H1 (cell line): ENCODE measurements at regions of chr1 and their contacts with region 1.

Region 1: GRCh38 chr1:205791568-205792180 is 16.4 kb upstream of the RAB29 start:
- DNase-seq: peak in 1 of 2 experiments; percentile 70
- H3K4me3 ChIP-seq: no peak overlapping the region
- H3K27ac ChIP-seq: no peak overlapping the region
- H3K4me1 ChIP-seq: no peaks in the 10 kb centered on the region
- H3K27me3 ChIP-seq: no peaks in the 10 kb centered on the region
- CTCF ChIP-seq: peak; percentile 82 to 84 (median 84)
- EP300 ChIP-seq: no peak
- POLR2A ChIP-seq: no peak
- RAD21 ChIP-seq: peak; percentile 93 to 95

Region 2: GRCh38 chr1:205576808-205577761 is 214.6 kb before region 1 on chr1:
- CTCF ChIA-PET with region 1: no interaction called
- POLR2A ChIA-PET with region 1: no interaction called
- DNase-seq: no peak
- H3K4me3 ChIP-seq: no peak overlapping the region
- H3K27ac ChIP-seq: no peak overlapping the region
- H3K4me1 ChIP-seq: peaks cover 0 to 11% (median 0%) of the 10 kb centered on the region in 4 experiments; a peak in 4 of 7 replicates
- H3K27me3 ChIP-seq: peaks cover 0 to 8% (median 3%) of the 10 kb centered on the region in 4 experiments; a peak in 4 of 7 replicates
- CTCF ChIP-seq: peak in 1 of 3 experiments; percentile 8; a peak in 1 of 4 replicates
- EP300 ChIP-seq: no peak
- POLR2A ChIP-seq: no peak
- RAD21 ChIP-seq: no peak; a peak in 1 of 4 replicates

Region 3: GRCh38 chr1:205711104-205712020 is 80.3 kb before region 1 on chr1:
- CTCF ChIA-PET with region 1: no interaction called
- POLR2A ChIA-PET with region 1: no interaction called
- DNase-seq: no peak
- H3K4me3 ChIP-seq: no peak overlapping the region
- H3K27ac ChIP-seq: peak overlapping the region; percentile 12; the same call in 1 of the 2 replicates
- H3K4me1 ChIP-seq: peaks cover 0 to 3% (median 1%) of the 10 kb centered on the region in 4 experiments; a peak in 2 of 7 replicates
- H3K27me3 ChIP-seq: no peaks in the 10 kb centered on the region
- CTCF ChIP-seq: peak in 2 of 3 experiments; percentile 85 to 86; a peak in 3 of 4 replicates
- EP300 ChIP-seq: no peak
- POLR2A ChIP-seq: no peak
- RAD21 ChIP-seq: peak; percentile 94 to 95

Region 4: GRCh38 chr1:205805082-205805712 is 13.5 kb after region 1 on chr1:
- CTCF ChIA-PET with region 1: interaction called, 79 read pairs
- POLR2A ChIA-PET with region 1: interaction called, 4 read pairs
- DNase-seq: no peak
- H3K4me3 ChIP-seq: no peak overlapping the region
- H3K27ac ChIP-seq: no peak overlapping the region
- H3K4me1 ChIP-seq: peaks cover 0 to 5% (median 0%) of the 10 kb centered on the region in 4 experiments; a peak in 3 of 7 replicates
- H3K27me3 ChIP-seq: no peaks in the 10 kb centered on the region
- CTCF ChIP-seq: no peak
- EP300 ChIP-seq: no peak
- POLR2A ChIP-seq: no peak
- RAD21 ChIP-seq: no peak

Region 5: GRCh38 chr1:205827623-205828022 is 35.9 kb after region 1 on chr1:
- CTCF ChIA-PET with region 1: interaction called, 12 read pairs
- POLR2A ChIA-PET with region 1: no interaction called
- DNase-seq: no peak
- H3K4me3 ChIP-seq: no peak overlapping the region
- H3K27ac ChIP-seq: no peak overlapping the region
- H3K4me1 ChIP-seq: peaks cover 0 to 12% (median 2%) of the 10 kb centered on the region in 4 experiments; a peak in 4 of 7 replicates
- H3K27me3 ChIP-seq: no peaks in the 10 kb centered on the region
- CTCF ChIP-seq: no peak
- EP300 ChIP-seq: no peak
- POLR2A ChIP-seq: no peak
- RAD21 ChIP-seq: no peak

Region 6: GRCh38 chr1:205858141-205858961 is 66.7 kb after region 1 on chr1:
- CTCF ChIA-PET with region 1: interaction called, 10 read pairs
- POLR2A ChIA-PET with region 1: no interaction called
- DNase-seq: no peak
- H3K4me3 ChIP-seq: no peak overlapping the region
- H3K27ac ChIP-seq: no peak overlapping the region
- H3K4me1 ChIP-seq: no peaks in the 10 kb centered on the region
- H3K27me3 ChIP-seq: no peaks in the 10 kb centered on the region
- CTCF ChIP-seq: no peak
- EP300 ChIP-seq: no peak
- POLR2A ChIP-seq: no peak
- RAD21 ChIP-seq: no peak

Region 7: GRCh38 chr1:205919026-205919746 is 127.5 kb after region 1 on chr1:
- CTCF ChIA-PET with region 1: interaction called, 106 read pairs
- POLR2A ChIA-PET with region 1: interaction called, 3 read pairs
- DNase-seq: peak; percentile 70 to 92
- H3K4me3 ChIP-seq: no peak overlapping the region
- H3K27ac ChIP-seq: no peak overlapping the region
- H3K4me1 ChIP-seq: peaks cover 0 to 6% (median 2%) of the 10 kb centered on the region in 4 experiments; a peak in 4 of 7 replicates
- H3K27me3 ChIP-seq: no peaks in the 10 kb centered on the region; a peak in 1 of 7 replicates
- CTCF ChIP-seq: peak; percentile 84 to 99 (median 96)
- EP300 ChIP-seq: no peak
- POLR2A ChIP-seq: no peak
- RAD21 ChIP-seq: peak; percentile 98 to 99

Region 8: DNA sequence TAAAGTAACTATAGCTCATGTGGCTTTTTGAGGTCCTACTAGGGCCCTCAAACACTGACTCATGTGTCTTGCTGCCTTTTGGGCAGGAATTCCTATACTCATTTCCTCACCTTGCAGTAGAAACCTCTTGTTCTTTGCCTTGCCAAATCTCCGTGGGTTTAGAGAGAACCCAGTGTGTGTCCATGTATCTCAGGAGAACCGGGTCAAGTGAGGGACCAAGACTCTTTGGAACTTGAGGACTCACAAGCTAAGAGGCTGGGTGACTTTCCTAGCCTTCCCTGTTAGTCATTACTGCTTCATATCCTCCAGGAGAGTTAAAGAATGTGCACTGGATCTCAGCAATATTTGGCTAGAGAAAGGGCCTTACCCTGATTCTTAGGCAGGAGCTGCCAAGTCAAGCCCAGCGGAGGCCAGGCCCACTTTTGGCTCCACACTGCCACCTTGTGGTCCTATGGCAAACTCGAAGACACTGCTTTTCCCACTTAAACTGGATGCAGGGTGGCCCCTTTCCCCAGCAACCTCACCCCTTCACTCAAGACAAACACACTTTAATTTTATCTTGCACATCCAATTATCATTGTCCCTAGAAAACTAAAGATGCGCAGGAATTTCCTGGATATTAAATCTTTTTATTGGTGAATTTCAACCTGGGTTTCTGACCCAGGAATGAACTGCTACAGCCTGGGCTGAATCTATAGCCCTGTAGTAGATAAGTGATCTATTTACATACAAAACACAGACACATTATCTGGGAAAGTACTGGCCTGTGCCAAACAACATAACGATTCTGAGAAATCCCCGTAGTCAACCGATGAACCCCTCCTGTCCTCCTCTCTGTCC is 314.9 kb after region 1 on chr1:
- CTCF ChIA-PET with region 1: interaction called, 11 read pairs
- POLR2A ChIA-PET with region 1: no interaction called
- DNase-seq: peak; percentile 47 to 91
- H3K4me3 ChIP-seq: no peak overlapping the region
- H3K27ac ChIP-seq: no peak overlapping the region
- H3K4me1 ChIP-seq: no peaks in the 10 kb centered on the region
- H3K27me3 ChIP-seq: no peaks in the 10 kb centered on the region
- CTCF ChIP-seq: peak; percentile 92 to 95 (median 93)
- EP300 ChIP-seq: no peak
- POLR2A ChIP-seq: no peak
- RAD21 ChIP-seq: peak; percentile 93 to 96